B cell (primary cell): ENCODE measurements at regions of chr7 and their contacts with region 1.

Region 1: GRCh38 chr7:37311355-37311754 is 137.3 kb downstream of the ELMO1 start:
- DNase-seq: peak; percentile 66
- ATAC-seq: peak; percentile 62
- H3K4me3 ChIP-seq: no peak overlapping the region
- H3K4me3 Mint-ChIP-seq: peak overlapping the region; percentile 46
- H3K27ac ChIP-seq: peak overlapping the region; percentile 7 to 58
- H3K27ac Mint-ChIP-seq: peak overlapping the region; percentile 88
- H3K4me1 ChIP-seq: peaks cover 48% of the 10 kb centered on the region in 2 donors
- H3K4me1 Mint-ChIP-seq: peaks cover 68% of the 10 kb centered on the region
- H3K27me3 ChIP-seq: no peaks in the 10 kb centered on the region
- H3K27me3 Mint-ChIP-seq: no peaks in the 10 kb centered on the region
- CTCF ChIP-seq: no peak

Region 2: GRCh38 chr7:37149051-37149772 is 162.1 kb before region 1 on chr7:
- CTCF ChIA-PET with region 1: no interaction called
- POLR2A ChIA-PET with region 1: no interaction called
- intact Hi-C with region 1: no loop called
- DNase-seq: no peak
- ATAC-seq: no peak
- H3K4me3 ChIP-seq: no peak overlapping the region
- H3K4me3 Mint-ChIP-seq: no peak overlapping the region
- H3K27ac ChIP-seq: no peak overlapping the region
- H3K27ac Mint-ChIP-seq: no peak overlapping the region
- H3K4me1 ChIP-seq: no peaks in the 10 kb centered on the region
- H3K4me1 Mint-ChIP-seq: peaks cover 5% of the 10 kb centered on the region
- H3K27me3 ChIP-seq: no peaks in the 10 kb centered on the region
- H3K27me3 Mint-ChIP-seq: no peaks in the 10 kb centered on the region
- CTCF ChIP-seq: no peak

Region 3: GRCh38 chr7:37290731-37291130 is 20.6 kb before region 1 on chr7:
- CTCF ChIA-PET with region 1: interaction called, 3 read pairs
- POLR2A ChIA-PET with region 1: interaction called, 3 read pairs
- intact Hi-C with region 1: loop called (anchors 2 kb)
- DNase-seq: no peak
- ATAC-seq: no peak
- H3K4me3 ChIP-seq: no peak overlapping the region
- H3K4me3 Mint-ChIP-seq: no peak overlapping the region
- H3K27ac ChIP-seq: peak overlapping the region in 1 of 2 donors; percentile 39
- H3K27ac Mint-ChIP-seq: peak overlapping the region; percentile 11
- H3K4me1 ChIP-seq: peaks cover 16 to 25% of the 10 kb centered on the region in 2 donors
- H3K4me1 Mint-ChIP-seq: peaks cover 40% of the 10 kb centered on the region
- H3K27me3 ChIP-seq: no peaks in the 10 kb centered on the region
- H3K27me3 Mint-ChIP-seq: no peaks in the 10 kb centered on the region
- CTCF ChIP-seq: no peak

Region 4: DNA sequence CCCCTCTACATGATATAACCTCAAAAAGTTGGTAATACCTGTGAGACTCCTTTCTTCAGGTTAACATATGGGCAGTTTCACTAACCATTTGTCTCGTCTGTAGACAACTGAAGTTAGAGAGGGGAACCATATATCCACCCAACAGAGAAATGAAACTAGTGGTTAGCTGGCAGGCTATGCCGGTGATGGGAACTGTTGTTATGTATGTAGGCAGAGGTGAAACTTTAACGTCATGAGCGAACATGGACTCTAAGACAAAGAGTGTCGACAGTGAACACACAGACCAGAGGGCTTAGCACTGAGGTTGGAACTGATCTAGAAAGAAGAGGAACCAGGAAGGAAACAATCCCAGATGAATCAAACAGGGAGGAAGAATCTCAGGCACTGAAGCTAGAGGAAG is 24.9 kb after region 1 on chr7:
- CTCF ChIA-PET with region 1: interaction called, 6 read pairs
- POLR2A ChIA-PET with region 1: interaction called, 7 read pairs
- intact Hi-C with region 1: loop called (anchors 1 kb)
- DNase-seq: peak; percentile 87
- ATAC-seq: peak; percentile 94
- H3K4me3 ChIP-seq: peak overlapping the region in 4 of 5 experiments; percentile 9 to 46 (median 28)
- H3K4me3 Mint-ChIP-seq: peak overlapping the region; percentile 83
- H3K27ac ChIP-seq: peak overlapping the region; percentile 79 to 89
- H3K27ac Mint-ChIP-seq: peak overlapping the region; percentile 95
- H3K4me1 ChIP-seq: peaks cover 38 to 51% of the 10 kb centered on the region in 2 donors
- H3K4me1 Mint-ChIP-seq: peaks cover 86% of the 10 kb centered on the region
- H3K27me3 ChIP-seq: no peaks in the 10 kb centered on the region
- H3K27me3 Mint-ChIP-seq: no peaks in the 10 kb centered on the region
- CTCF ChIP-seq: no peak